A673 (cell line): ENCODE measurements at regions of chr9 and their contacts with region 1.

Region 1: GRCh38 chr9:37104183-37104889 is 16.0 kb upstream of the ZCCHC7 start:
- DNase-seq: no peak
- H3K4me3 ChIP-seq: no peak overlapping the region
- H3K27ac ChIP-seq: peak overlapping the region; percentile 13
- H3K4me1 ChIP-seq: peaks cover 13% of the 10 kb centered on the region
- H3K27me3 ChIP-seq: no peaks in the 10 kb centered on the region
- CTCF ChIP-seq: no peak

Region 2: DNA sequence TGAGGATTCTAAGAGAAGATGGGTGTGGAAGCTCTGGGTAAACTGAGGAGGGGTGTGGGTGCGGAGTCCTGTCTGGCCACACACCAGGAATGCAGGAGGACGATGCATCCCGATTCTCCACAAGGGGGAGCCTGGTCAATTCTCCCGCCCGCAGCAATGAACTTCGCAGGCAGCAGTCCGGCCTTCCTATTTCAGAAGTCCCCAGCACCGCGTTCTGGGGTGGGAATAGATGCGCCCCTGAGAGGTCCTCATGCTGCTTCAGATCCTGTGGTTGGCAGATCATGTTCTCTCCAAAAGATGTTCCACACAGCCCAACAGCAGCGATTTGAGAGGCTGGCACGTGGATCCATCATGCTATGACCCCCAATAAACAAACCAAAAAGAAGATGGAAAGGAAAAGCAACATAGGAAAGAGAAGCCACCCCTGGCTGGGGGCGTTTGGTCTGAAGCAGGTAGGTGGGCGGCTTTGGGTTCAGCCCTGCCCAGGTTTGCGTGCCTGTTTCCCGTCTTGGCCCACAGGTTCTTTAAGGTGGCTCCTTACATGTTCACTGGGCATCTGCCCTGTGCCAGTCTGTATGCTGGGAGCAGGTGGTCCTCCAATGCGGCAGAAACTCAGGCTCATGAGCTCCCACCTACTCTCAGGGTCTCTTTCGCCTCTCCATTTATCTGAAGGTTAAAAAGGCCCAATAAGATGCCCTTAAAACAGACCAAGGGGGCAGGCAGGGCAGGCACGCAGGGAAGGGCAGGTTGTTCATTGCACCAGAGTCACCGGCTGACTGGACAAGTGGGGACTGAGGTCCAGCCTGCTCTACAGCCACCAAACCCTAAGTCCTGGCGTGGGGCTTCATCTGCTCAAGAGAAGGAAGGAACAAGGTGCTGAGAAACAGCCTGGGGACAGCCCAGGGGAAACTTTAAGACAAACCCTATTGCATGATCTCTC is 241.9 kb before region 1 on chr9:
- CTCF ChIA-PET with region 1: no interaction called
- POLR2A ChIA-PET with region 1: no interaction called
- intact Hi-C with region 1: no loop called
- DNase-seq: peak; percentile 58
- H3K4me3 ChIP-seq: no peak overlapping the region
- H3K27ac ChIP-seq: no peak overlapping the region
- H3K4me1 ChIP-seq: peaks cover 14% of the 10 kb centered on the region
- H3K27me3 ChIP-seq: no peaks in the 10 kb centered on the region
- CTCF ChIP-seq: peak; percentile 84

Region 3: DNA sequence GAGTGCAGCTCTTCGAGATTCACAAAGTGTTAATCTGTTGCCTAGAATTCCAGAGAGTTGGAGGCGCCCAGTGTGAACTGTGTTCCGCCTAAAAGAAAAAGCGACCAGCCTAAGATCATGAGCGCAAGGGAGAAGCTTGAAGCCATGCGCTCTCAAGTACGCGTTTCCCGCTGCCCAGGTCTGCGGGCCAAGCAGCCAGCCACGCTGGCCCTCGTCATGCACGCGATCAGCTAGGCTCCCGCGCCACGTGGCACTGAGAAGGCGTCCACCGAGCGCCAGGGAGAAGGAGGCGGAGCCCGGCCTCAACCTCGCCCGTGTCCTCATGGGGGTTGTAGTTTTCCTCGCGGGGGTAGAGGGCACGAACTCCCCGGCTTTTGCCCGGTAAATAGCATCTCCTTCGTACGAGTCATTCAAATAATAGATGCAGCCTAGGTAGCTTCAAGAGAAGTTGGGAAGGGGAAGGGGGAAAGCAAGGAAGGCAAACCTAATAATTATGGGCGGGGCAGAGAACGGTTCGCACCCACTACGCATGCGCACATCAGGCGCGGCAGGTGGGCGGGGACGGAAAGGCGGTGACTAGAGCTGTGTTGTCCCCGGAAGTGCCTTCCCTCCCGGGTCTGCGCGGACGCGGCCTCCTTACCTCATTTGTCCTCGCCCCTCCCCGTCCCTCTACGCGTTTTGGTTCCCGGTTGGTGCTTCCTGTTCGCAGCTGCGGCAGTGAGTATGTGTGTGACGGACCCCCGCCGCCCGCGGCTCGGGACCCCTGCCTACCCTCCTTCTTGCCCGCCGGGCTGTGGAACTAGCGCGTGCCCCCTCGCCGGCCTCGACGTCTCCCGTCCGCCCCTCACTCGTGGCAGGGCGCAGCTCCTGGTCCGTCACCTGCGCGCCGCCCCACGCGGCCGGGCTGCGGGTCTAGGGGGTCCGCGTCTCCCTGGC is 15.8 kb after region 1 on chr9 and contains the start of gene ZCCHC7:
- CTCF ChIA-PET with region 1: interaction called, 3 read pairs
- POLR2A ChIA-PET with region 1: no interaction called
- intact Hi-C with region 1: loop called (anchors 2 kb)
- DNase-seq: peak; percentile 97
- H3K4me3 ChIP-seq: peak within 1 kb of the TSS; percentile 96
- H3K27ac ChIP-seq: peak within 1 kb of the TSS; percentile 97
- H3K4me1 ChIP-seq: peaks cover 17% of the 10 kb centered on the region
- H3K27me3 ChIP-seq: no peaks in the 10 kb centered on the region
- CTCF ChIP-seq: no peak
- total RNA-seq, gene ZCCHC7: 26.0 and 27.9 TPM in 2 replicates